ENCODE measurements at regions of chrX and their contacts with region 1.

Region 1: DNA sequence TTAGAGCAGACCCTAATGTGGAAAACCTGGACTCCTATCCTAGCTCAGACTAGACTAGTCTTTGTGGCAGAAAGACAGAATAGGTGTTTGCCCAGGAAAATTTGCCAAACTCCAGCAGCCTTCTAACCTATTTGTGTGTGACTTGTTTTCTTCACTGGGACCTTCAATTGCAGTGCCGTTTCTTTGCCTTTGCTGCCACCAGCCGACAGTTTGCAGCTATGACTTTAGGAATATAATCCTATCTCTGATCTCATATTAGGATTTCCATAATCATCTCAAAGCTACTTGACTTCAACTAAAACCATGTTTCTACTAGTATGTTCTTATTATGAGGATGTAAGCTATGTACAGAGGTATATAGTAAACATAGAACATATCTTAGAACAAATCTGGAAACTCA is 60.2 kb upstream of the PGAM4 start:
- DNase-seq: peak; percentile 10
- H3K4me3 ChIP-seq: no peak overlapping the region
- H3K27ac ChIP-seq: no peak overlapping the region
- H3K4me1 ChIP-seq: no peaks in the 10 kb centered on the region
- H3K27me3 ChIP-seq: no peaks in the 10 kb centered on the region
- CTCF ChIP-seq: peak in 2 of 4 experiments; percentile 46 to 57
- POLR2A ChIP-seq: no peak

Region 2: GRCh38 chrX:77910108-77910840 is 119.4 kb before region 1 on chrX and contains the start of gene ATP7A:
- intact Hi-C with region 1: loop called (anchors 10 kb)
- DNase-seq: peak; percentile 81
- H3K4me3 ChIP-seq: peak within 1 kb of the TSS; percentile 44 to 48
- H3K27ac ChIP-seq: peak within 1 kb of the TSS; percentile 76 to 86
- H3K4me1 ChIP-seq: no peaks in the 10 kb centered on the region
- H3K27me3 ChIP-seq: no peaks in the 10 kb centered on the region
- CTCF ChIP-seq: peak in 3 of 4 experiments; percentile 57 to 76 (median 64)
- POLR2A ChIP-seq: peak; percentile 60
- total RNA-seq, gene ATP7A: 9.8 to 15.1 TPM

Region 3: DNA sequence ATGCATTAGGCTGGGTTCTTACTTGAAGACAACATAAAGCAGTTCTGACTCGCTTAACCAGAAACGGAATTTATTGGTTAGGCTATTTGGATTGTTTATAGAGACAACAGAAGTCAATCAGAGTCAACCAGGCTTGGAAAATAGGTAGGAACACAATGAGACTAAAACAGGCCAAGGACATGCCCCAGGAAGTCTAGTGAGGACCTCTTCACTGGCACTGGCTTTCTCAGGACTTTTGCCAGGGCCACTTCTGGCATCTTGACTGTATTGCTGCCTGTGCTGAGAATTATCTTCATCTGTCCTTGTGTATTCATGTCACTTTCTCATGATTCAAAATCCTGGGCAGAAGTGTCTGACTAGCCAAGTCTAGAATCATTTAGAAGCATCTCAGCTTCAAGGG is 79.8 kb before region 1 on chrX:
- intact Hi-C with region 1: no loop called
- DNase-seq: peak; percentile 24
- H3K4me3 ChIP-seq: no peak overlapping the region
- H3K27ac ChIP-seq: no peak overlapping the region
- H3K4me1 ChIP-seq: no peaks in the 10 kb centered on the region
- H3K27me3 ChIP-seq: no peaks in the 10 kb centered on the region
- CTCF ChIP-seq: no peak
- POLR2A ChIP-seq: no peak

Region 4: DNA sequence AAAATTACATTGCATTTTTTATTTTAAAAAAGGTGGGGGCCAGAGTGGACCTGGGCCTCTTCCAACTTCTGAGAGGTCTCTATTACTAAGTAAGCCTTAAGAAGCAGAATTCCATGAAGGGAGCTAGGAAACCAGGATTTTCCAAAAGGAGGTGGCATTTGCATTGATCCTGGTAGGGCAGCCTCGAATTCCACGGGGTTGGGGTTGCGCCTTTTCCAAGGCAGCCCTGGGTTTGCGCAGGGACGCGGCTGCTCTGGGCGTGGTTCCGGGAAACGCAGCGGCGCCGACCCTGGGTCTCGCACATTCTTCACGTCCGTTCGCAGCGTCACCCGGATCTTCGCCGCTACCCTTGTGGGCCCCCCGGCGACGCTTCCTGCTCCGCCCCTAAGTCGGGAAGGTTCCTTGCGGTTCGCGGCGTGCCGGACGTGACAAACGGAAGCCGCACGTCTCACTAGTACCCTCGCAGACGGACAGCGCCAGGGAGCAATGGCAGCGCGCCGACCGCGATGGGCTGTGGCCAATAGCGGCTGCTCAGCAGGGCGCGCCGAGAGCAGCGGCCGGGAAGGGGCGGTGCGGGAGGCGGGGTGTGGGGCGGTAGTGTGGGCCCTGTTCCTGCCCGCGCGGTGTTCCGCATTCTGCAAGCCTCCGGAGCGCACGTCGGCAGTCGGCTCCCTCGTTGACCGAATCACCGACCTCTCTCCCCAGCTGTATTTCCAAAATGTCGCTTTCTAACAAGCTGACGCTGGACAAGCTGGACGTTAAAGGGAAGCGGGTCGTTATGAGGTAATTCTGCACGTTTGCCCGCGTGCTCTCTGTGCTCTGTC is 74.2 kb after region 1 on chrX and contains the start of gene PGK1:
- intact Hi-C with region 1: no loop called
- DNase-seq: peak; percentile 91
- H3K4me3 ChIP-seq: peak within 1 kb of the TSS; percentile 56 to 57
- H3K27ac ChIP-seq: peak within 1 kb of the TSS; percentile 85 to 88
- H3K4me1 ChIP-seq: no peaks in the 10 kb centered on the region
- H3K27me3 ChIP-seq: no peaks in the 10 kb centered on the region
- CTCF ChIP-seq: peak in 1 of 4 experiments; percentile 7
- POLR2A ChIP-seq: peak; percentile 79
- total RNA-seq, gene PGK1: 120 to 146 TPM